Endothelial cell of umbilical vein (primary cell): ENCODE measurements at regions of chr21 and their contacts with region 1.

Region 1: GRCh38 chr21:34603002-34603709 is 11.8 kb downstream of the RCAN1 start:
- DNase-seq: peak; percentile 74
- H3K4me3 ChIP-seq: no peak overlapping the region
- H3K27ac ChIP-seq: no peak overlapping the region
- H3K4me1 ChIP-seq: no peaks in the 10 kb centered on the region
- H3K27me3 ChIP-seq: no peaks in the 10 kb centered on the region
- CTCF ChIP-seq: peak; percentile 74 to 88
- POLR2A ChIP-seq: no peak

Region 2: DNA sequence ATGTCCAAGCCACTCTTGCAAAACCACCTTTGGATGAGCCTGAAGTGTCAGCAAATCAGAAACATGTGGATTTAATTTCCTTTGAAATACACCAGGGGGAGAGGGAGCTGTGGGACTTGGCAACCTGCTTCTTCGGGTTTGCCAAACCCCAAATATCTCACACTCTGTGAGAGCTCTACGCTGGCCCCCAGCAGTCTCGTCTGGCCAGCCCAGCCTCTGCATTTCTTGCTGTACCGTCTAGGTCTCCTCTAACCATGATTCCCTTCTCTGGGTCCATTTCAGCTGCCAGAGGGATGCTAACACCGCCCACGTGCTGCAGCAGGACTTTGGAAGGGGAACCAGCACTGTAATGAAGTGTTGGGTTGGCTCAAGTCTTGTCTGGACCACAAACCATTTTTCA is 415.2 kb before region 1 on chr21:
- CTCF ChIA-PET with region 1: no interaction called
- POLR2A ChIA-PET with region 1: no interaction called
- dilution Hi-C with region 1: no loop called
- intact Hi-C with region 1: no loop called
- DNase-seq: no peak
- H3K4me3 ChIP-seq: no peak overlapping the region
- H3K27ac ChIP-seq: no peak overlapping the region
- H3K4me1 ChIP-seq: no peaks in the 10 kb centered on the region
- H3K27me3 ChIP-seq: peaks cover 0 to 2% of the 10 kb centered on the region in 2 experiments
- CTCF ChIP-seq: no peak
- POLR2A ChIP-seq: no peak

Region 3: GRCh38 chr21:34510148-34511142 is 92.7 kb before region 1 on chr21:
- CTCF ChIA-PET with region 1: interaction called, 394 read pairs
- POLR2A ChIA-PET with region 1: interaction called, 4 read pairs
- dilution Hi-C with region 1: no loop called
- intact Hi-C with region 1: loop called (anchors 1 kb)
- DNase-seq: peak; percentile 78
- H3K4me3 ChIP-seq: no peak overlapping the region
- H3K27ac ChIP-seq: no peak overlapping the region
- H3K4me1 ChIP-seq: no peaks in the 10 kb centered on the region
- H3K27me3 ChIP-seq: no peaks in the 10 kb centered on the region
- CTCF ChIP-seq: peak; percentile 69 to 94
- POLR2A ChIP-seq: no peak

Region 4: GRCh38 chr21:34526618-34527290 is 76.4 kb before region 1 on chr21:
- CTCF ChIA-PET with region 1: interaction called, 45 read pairs
- POLR2A ChIA-PET with region 1: interaction called, 4 read pairs
- dilution Hi-C with region 1: no loop called
- intact Hi-C with region 1: loop called (anchors 1 kb)
- DNase-seq: peak; percentile 99
- H3K4me3 ChIP-seq: peak overlapping the region; percentile 41 to 93 (median 76)
- H3K27ac ChIP-seq: peak overlapping the region; percentile 98
- H3K4me1 ChIP-seq: peaks cover 23% of the 10 kb centered on the region
- H3K27me3 ChIP-seq: no peaks in the 10 kb centered on the region
- CTCF ChIP-seq: no peak
- POLR2A ChIP-seq: peak; percentile 97

Region 5: GRCh38 chr21:34553151-34553952 is 49.8 kb before region 1 on chr21:
- CTCF ChIA-PET with region 1: interaction called, 16 read pairs
- POLR2A ChIA-PET with region 1: no interaction called
- dilution Hi-C with region 1: no loop called
- intact Hi-C with region 1: no loop called
- DNase-seq: peak; percentile 96
- H3K4me3 ChIP-seq: peak overlapping the region in 1 of 3 experiments; percentile 9
- H3K27ac ChIP-seq: peak overlapping the region; percentile 81
- H3K4me1 ChIP-seq: peaks cover 21% of the 10 kb centered on the region
- H3K27me3 ChIP-seq: no peaks in the 10 kb centered on the region
- CTCF ChIP-seq: no peak
- POLR2A ChIP-seq: no peak

Region 6: GRCh38 chr21:34592120-34592955 is 10.8 kb before region 1 on chr21:
- CTCF ChIA-PET with region 1: interaction called, 32 read pairs
- POLR2A ChIA-PET with region 1: interaction called, 3 read pairs
- dilution Hi-C with region 1: no loop called
- intact Hi-C with region 1: no loop called
- DNase-seq: peak; percentile 16
- H3K4me3 ChIP-seq: no peak overlapping the region
- H3K27ac ChIP-seq: no peak overlapping the region
- H3K4me1 ChIP-seq: no peaks in the 10 kb centered on the region
- H3K27me3 ChIP-seq: no peaks in the 10 kb centered on the region
- CTCF ChIP-seq: no peak
- POLR2A ChIP-seq: no peak

Region 7: GRCh38 chr21:34625030-34625593 is 22.0 kb after region 1 on chr21:
- CTCF ChIA-PET with region 1: interaction called, 19 read pairs
- POLR2A ChIA-PET with region 1: no interaction called
- dilution Hi-C with region 1: no loop called
- intact Hi-C with region 1: loop called (anchors 1 kb)
- DNase-seq: no peak
- H3K4me3 ChIP-seq: no peak overlapping the region
- H3K27ac ChIP-seq: no peak overlapping the region
- H3K4me1 ChIP-seq: no peaks in the 10 kb centered on the region
- H3K27me3 ChIP-seq: peaks cover 17 to 20% of the 10 kb centered on the region in 2 experiments
- CTCF ChIP-seq: no peak
- POLR2A ChIP-seq: no peak

Region 8: GRCh38 chr21:34726627-34727337 is 123.6 kb after region 1 on chr21:
- CTCF ChIA-PET with region 1: no interaction called
- POLR2A ChIA-PET with region 1: no interaction called
- dilution Hi-C with region 1: no loop called
- intact Hi-C with region 1: no loop called
- DNase-seq: no peak
- H3K4me3 ChIP-seq: no peak overlapping the region
- H3K27ac ChIP-seq: no peak overlapping the region
- H3K4me1 ChIP-seq: no peaks in the 10 kb centered on the region
- H3K27me3 ChIP-seq: peaks cover 6 to 20% of the 10 kb centered on the region in 2 experiments
- CTCF ChIP-seq: no peak
- POLR2A ChIP-seq: no peak

Region 9: DNA sequence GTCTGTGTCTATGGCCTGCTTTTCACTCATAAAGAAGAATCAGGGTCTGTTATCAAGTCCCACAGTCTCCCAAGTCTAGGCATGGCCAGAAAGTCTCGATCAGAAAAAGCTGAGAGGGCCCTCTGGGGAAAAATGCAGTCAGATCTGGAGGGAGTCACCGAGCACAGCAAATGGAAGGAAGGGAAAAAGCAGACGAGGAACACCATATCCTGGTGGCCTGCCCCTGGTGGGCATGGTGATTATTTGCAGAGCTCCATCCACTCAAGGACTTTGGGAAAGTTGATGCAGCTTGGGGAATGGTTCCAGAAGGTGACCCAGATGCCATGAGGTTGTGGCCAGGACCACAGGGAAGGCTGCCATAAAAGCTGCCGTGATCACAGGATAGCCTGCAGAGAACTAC is 254.7 kb after region 1 on chr21:
- CTCF ChIA-PET with region 1: no interaction called
- POLR2A ChIA-PET with region 1: no interaction called
- dilution Hi-C with region 1: no loop called
- intact Hi-C with region 1: no loop called
- DNase-seq: no peak
- H3K4me3 ChIP-seq: no peak overlapping the region
- H3K27ac ChIP-seq: no peak overlapping the region
- H3K4me1 ChIP-seq: no peaks in the 10 kb centered on the region
- H3K27me3 ChIP-seq: no peaks in the 10 kb centered on the region
- CTCF ChIP-seq: peak; percentile 21 to 38
- POLR2A ChIP-seq: no peak